Activated CD4-positive, alpha-beta T cell treated with anti-CD3 and anti-CD28 coated beads, Interleukin-2, amount 10 ng/mL, durations not matched to agents 24 days and 14 days (primary cell): ENCODE measurements at regions of chr2 and their contacts with region 1.

Region 1: DNA sequence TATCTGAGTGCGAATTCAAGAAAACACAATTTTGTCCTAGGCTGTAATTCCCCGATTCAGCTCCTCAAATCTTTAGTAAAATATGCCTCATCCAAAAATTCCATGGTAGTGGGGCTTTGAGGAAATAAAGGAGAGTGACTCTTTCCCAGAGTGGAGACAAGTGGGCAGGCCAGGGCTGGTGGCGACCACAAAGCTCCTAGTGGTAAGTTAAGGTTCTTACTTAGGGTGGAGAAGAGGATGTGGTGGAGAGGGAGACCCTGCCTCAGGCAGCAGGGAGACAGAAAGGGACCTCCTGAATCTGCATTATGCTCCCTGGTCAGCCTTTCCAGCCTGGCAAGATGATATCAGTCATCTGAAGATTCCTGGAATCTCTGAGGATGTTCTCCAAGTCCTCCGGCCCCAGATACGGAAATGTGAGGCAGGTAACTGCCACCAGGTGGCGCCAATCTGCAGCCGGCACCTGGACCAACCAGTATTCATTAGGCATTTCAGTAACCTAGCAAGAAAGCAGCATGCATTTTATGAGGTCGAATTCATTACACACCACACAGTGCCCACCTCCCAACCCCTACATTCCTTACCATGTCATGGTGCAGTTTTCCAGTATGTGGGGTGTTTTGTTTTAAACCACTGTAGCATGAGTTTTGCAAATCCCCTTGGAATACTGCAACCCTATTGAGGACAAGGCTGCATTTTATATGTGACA is 106.4 kb downstream of the POLE4 start:
- DNase-seq: peak; percentile 84
- H3K4me3 Mint-ChIP-seq: no peak overlapping the region
- H3K27ac Mint-ChIP-seq: no peak overlapping the region
- H3K4me1 Mint-ChIP-seq: no peaks in the 10 kb centered on the region
- H3K27me3 Mint-ChIP-seq: peaks cover 2% of the 10 kb centered on the region

Region 2: DNA sequence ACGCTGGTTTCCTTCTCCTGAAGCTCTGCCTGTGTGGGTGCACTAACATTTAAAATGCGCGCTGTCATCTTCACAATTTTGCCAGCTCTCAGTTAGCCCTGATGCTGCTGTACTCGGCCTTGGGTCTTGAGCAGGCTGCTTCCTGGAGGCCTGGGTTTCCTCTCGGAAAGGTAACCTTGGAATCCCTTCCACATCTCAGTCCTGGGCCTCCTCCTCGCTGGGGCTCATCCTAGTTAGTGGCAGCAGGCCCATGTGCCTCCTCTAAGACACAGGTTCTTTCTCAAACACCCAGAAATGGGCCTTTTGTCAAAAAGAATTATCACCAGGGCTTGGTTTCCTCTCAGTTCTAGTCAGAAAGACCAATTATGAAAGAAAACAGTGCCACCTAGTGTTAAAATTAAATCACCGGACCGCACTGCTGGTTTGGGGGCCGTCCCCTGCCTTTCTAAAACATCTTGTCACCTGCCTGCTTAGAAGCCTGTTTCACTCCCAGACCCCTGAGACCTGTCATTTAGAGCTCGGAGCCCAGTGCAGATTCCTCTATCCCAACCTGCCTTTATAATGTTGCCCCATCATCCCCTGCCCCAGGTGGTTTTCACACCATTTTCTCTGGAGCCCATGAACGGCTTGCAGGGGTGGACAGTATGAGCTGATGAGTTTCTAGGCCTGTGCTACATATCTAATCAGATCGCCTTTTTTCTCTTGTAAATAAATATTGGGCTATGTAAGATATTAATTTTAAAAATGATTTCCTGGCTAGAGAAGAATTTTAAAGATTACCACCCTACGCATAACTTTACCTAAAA is 188.6 kb before region 1 on chr2:
- intact Hi-C with region 1: no loop called
- DNase-seq: peak; percentile 86
- H3K4me3 Mint-ChIP-seq: no peak overlapping the region
- H3K27ac Mint-ChIP-seq: peak overlapping the region; percentile 42
- H3K4me1 Mint-ChIP-seq: peaks cover 2% of the 10 kb centered on the region
- H3K27me3 Mint-ChIP-seq: no peaks in the 10 kb centered on the region

Region 3: DNA sequence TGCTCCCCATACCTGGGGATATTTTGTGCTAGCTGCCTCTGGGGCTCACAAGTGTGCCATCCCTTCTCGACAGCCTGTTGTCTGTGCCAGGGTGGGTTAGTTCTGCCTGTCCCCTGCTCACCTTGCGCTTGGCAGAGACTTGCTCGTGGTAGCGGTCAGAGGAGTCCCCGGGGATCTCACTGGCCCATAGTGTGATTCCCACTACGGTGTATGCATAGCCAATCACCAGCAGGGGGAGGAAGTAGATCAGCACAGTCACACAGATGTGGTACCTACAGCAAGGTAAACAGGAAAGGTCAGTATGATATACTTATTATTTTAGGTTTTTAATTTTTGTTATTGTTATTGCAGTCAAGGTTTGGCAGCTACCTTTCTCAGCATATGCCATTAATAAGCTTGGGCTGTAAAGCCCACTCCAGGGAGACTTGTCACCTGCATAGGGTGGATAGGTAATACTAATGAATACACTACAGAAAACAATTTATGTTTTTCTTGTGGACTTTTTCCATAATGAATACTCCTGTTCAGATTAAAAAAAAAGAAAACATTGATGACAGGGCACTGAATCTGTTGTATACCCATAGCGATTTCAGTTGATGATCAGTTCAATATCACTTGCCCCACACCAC is 11.2 kb before region 1 on chr2:
- intact Hi-C with region 1: no loop called
- DNase-seq: no peak
- H3K4me3 Mint-ChIP-seq: no peak overlapping the region
- H3K27ac Mint-ChIP-seq: no peak overlapping the region
- H3K4me1 Mint-ChIP-seq: no peaks in the 10 kb centered on the region
- H3K27me3 Mint-ChIP-seq: peaks cover 4% of the 10 kb centered on the region

Region 4: DNA sequence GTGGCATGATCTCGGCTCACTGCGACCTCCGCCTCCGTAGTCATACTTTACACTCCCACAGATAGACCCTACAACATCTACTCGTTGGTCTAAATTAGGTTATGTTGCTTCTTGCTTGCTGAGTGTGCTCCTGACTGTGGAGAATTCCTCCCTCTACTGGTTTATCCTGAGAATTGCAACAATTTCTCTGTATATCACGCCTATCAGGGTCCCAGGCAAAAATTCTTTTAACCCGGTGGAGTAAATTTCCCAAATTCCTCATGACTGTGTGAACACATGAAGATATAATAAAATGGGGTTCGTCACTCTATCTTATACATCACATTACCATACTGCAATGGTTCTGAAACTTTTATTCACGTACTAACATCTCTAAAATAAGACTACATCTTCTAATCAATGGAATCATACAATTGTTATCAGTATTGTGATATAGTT is 339.2 kb after region 1 on chr2:
- intact Hi-C with region 1: loop called (anchors 2 kb)
- DNase-seq: no peak
- H3K4me3 Mint-ChIP-seq: no peak overlapping the region
- H3K27ac Mint-ChIP-seq: no peak overlapping the region
- H3K4me1 Mint-ChIP-seq: no peaks in the 10 kb centered on the region
- H3K27me3 Mint-ChIP-seq: peaks cover 10% of the 10 kb centered on the region

Region 5: GRCh38 chr2:75608684-75609333 is 544.0 kb after region 1 on chr2:
- intact Hi-C with region 1: loop called (anchors 10 kb)
- DNase-seq: peak; percentile 85
- H3K4me3 Mint-ChIP-seq: no peak overlapping the region
- H3K27ac Mint-ChIP-seq: no peak overlapping the region
- H3K4me1 Mint-ChIP-seq: no peaks in the 10 kb centered on the region
- H3K27me3 Mint-ChIP-seq: peaks cover 37% of the 10 kb centered on the region